PC-9 (cell line): ENCODE measurements at regions of chr12 and their contacts with region 1.

Region 1: DNA sequence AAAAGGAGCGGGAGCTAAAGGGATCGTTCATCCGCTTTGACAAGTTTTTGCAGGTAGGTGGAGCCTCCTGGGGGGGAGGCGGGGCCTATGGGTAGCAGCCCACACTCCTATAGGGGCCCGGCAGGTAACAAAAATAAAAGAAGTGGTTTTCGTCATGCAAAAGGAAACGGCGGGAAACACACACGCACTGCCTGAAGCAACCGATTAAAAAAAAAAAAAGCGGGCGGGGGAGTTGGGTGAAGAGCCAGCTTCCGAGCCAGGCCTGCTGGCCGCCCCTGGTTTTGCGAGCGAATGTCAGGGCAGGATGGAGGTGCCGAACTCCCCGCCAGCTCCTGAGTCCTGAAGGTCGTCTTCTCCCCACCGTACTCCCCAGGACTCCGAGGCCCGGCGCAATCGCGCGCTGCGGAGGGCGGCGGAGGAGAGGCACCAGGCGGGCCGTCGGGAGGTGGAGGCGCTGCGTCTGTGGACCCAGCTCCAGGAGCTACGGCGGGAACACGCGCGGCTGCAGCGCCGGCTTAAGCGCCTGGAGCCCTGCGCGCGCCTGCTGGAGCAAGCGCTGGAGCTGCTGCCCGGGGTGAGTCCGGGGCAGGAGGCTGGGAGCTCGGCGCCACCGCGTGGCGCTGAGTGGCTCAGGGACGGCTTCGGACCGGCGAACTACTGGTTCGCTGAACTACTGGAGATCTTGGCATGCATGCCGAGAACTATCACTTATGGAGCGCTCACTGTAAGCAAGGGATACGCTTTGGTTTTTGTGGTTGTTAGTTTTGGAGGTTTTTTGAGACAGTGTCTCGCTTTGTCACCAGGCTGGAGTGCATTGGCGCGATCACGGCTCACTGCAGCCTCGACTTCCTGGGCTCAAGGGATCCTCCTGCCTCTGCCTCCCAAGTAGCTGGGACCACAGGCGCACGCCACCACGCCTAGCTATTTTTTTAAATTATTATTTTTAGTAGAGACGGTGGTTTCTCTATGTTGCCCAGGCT is 3.6 kb downstream of the CFAP73 start:
- DNase-seq: peak; percentile 67 to 81
- H3K4me3 ChIP-seq: peak overlapping the region; percentile 61
- H3K27ac ChIP-seq: no peak overlapping the region
- H3K4me1 ChIP-seq: peaks cover 18% of the 10 kb centered on the region; the same call in 1 of the 2 replicates
- H3K27me3 ChIP-seq: no peaks in the 10 kb centered on the region
- CTCF ChIP-seq: peak; percentile 56

Region 2: GRCh38 chr12:112906712-112907414 is 246.3 kb before region 1 on chr12 and contains the start of gene OAS1:
- CTCF ChIA-PET with region 1: no interaction called
- POLR2A ChIA-PET with region 1: no interaction called
- intact Hi-C with region 1: loop called (anchors 10 kb)
- DNase-seq: peak; percentile 43 to 73
- H3K4me3 ChIP-seq: peak within 1 kb of the TSS; percentile 48
- H3K27ac ChIP-seq: peak within 1 kb of the TSS; percentile 58
- H3K4me1 ChIP-seq: peaks cover 18% of the 10 kb centered on the region
- H3K27me3 ChIP-seq: no peaks in the 10 kb centered on the region
- CTCF ChIP-seq: no peak
- total RNA-seq, gene OAS1: 13.4 and 18.8 TPM in 2 replicates

Region 3: DNA sequence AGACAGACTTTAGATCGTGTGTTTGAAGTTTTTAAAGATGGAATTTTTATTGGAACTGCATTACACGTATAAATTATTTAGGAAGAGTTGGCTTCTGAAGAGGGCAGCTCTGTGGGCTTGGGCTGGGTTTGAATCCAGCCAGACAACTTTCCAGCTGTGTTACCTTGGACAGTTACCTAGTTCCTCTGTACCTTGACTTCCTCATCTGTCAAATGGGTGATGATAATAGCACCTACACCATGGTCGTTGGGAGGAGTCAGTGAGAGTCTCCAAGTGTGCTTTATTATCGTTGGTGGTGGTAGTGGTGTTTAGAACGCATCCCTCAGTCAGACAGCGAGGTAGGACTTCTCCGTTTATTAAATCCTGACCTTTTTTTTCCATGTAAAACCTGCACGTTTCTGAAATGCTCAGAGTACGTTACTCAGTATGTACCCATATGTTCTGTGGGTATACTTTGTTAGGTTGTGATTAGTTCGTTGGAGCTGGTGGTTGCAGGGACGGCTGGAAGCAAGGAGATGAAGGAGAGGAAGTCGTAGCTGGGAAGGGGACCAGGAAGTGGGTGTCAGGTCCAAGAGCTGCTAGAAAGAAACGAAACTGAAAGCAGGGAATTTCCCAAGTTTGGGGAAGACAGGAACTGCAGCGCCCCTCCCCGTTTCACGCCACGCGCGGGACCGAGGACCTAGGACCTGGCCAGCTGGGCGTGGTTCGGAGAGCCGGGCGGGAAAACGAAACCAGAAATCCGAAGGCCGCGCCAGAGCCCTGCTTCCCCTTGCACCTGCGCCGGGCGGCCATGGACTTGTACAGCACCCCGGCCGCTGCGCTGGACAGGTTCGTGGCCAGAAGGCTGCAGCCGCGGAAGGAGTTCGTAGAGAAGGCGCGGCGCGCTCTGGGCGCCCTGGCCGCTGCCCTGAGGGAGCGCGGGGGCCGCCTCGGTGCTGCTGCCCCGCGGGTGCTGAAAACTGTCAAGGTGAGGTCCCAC is 215.1 kb before region 1 on chr12 and contains the start of gene OAS3:
- CTCF ChIA-PET with region 1: no interaction called
- POLR2A ChIA-PET with region 1: no interaction called
- intact Hi-C with region 1: no loop called
- DNase-seq: peak; percentile 50 to 68
- H3K4me3 ChIP-seq: peak within 1 kb of the TSS; percentile 73
- H3K27ac ChIP-seq: peak within 1 kb of the TSS; percentile 1; the same call in 1 of the 2 replicates
- H3K4me1 ChIP-seq: peaks cover 29% of the 10 kb centered on the region
- H3K27me3 ChIP-seq: no peaks in the 10 kb centered on the region
- CTCF ChIP-seq: no peak
- total RNA-seq, gene OAS3: 16.2 and 17.4 TPM in 2 replicates

Region 4: DNA sequence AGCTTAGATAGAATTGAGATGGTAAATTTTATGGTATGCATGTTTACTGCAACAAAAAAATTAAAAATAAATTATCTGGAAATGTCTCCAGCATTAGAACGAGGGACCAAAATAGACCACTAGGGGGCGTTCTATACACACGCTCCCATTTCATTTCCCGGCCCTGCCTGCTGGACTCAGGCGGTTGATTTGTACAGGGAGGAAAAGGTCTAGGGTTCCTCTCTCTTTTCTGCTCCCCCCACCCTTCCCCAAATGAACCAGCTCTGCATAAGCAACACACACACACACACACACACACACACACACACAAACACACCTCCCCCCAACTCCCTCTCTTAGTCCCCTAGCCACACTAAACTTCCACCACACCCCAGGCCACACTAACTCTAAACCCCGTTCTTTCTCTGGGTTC is 104.4 kb before region 1 on chr12:
- CTCF ChIA-PET with region 1: interaction called, 3 read pairs
- POLR2A ChIA-PET with region 1: no interaction called
- intact Hi-C with region 1: loop called (anchors 1 kb)
- DNase-seq: peak; percentile 42 to 48
- H3K4me3 ChIP-seq: no peak overlapping the region
- H3K27ac ChIP-seq: no peak overlapping the region
- H3K4me1 ChIP-seq: no peaks in the 10 kb centered on the region
- H3K27me3 ChIP-seq: peaks cover 22% of the 10 kb centered on the region
- CTCF ChIP-seq: peak; percentile 86

Region 5: DNA sequence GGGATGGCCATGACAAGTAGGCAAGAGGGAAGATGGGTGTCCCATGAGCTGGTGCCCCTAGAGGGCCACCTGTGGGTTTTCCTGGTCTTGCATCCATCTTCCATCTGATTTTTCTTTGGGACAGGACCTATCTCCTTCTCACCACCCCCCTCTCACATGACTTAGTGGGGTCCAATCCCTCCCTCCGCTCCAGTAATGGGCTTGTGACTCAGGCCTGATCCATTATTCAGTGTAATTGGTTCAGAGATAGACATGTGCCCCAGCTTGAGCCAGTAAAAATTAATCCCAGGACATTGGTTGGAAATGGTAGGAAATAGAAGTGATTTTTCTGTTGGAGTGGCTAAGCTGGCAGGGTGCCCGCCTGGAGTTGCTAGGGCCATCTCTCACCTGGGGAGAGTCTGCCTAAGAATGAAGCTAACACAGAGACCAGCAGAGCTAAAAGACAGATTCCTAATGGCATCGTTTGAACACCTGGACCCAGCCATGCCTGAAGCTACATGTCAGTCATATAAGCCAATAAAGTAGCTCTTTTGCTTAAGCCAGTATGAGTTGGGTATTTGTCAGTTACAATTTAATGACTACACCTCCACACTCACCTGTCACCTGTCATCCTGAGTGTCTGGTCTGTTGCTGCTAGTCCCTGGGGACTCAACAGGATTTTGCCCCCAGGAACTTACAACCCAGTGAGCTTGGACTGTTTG is 32.3 kb before region 1 on chr12:
- CTCF ChIA-PET with region 1: interaction called, 10 read pairs
- POLR2A ChIA-PET with region 1: no interaction called
- intact Hi-C with region 1: no loop called
- DNase-seq: no peak
- H3K4me3 ChIP-seq: no peak overlapping the region
- H3K27ac ChIP-seq: no peak overlapping the region
- H3K4me1 ChIP-seq: no peaks in the 10 kb centered on the region
- H3K27me3 ChIP-seq: no peaks in the 10 kb centered on the region
- CTCF ChIP-seq: no peak

Region 6: GRCh38 chr12:113310489-113310888 is 157.4 kb after region 1 on chr12:
- CTCF ChIA-PET with region 1: no interaction called
- POLR2A ChIA-PET with region 1: no interaction called
- intact Hi-C with region 1: no loop called
- DNase-seq: no peak
- H3K4me3 ChIP-seq: no peak overlapping the region
- H3K27ac ChIP-seq: no peak overlapping the region
- H3K4me1 ChIP-seq: no peaks in the 10 kb centered on the region
- H3K27me3 ChIP-seq: no peaks in the 10 kb centered on the region
- CTCF ChIP-seq: peak; percentile 40; the same call in 1 of the 2 replicates